ENCODE measurements at regions of chr1 and their contacts with region 1.

Region 1: GRCh38 chr1:28172713-28173150 is 3.8 kb downstream of the PTAFR start:
- DNase-seq: peak; percentile 92
- ATAC-seq: peak; percentile 74
- H3K4me3 ChIP-seq: peak overlapping the region in 2 of 5 experiments; percentile 25 to 38
- H3K4me3 Mint-ChIP-seq: peak overlapping the region; percentile 60
- H3K27ac ChIP-seq: peak overlapping the region; percentile 59 to 66
- H3K27ac Mint-ChIP-seq: peak overlapping the region; percentile 88
- H3K4me1 ChIP-seq: peaks cover 85 to 94% of the 10 kb centered on the region in 2 donors
- H3K4me1 Mint-ChIP-seq: peaks cover 80% of the 10 kb centered on the region
- H3K27me3 ChIP-seq: no peaks in the 10 kb centered on the region
- H3K27me3 Mint-ChIP-seq: no peaks in the 10 kb centered on the region
- CTCF ChIP-seq: no peak

Region 2: DNA sequence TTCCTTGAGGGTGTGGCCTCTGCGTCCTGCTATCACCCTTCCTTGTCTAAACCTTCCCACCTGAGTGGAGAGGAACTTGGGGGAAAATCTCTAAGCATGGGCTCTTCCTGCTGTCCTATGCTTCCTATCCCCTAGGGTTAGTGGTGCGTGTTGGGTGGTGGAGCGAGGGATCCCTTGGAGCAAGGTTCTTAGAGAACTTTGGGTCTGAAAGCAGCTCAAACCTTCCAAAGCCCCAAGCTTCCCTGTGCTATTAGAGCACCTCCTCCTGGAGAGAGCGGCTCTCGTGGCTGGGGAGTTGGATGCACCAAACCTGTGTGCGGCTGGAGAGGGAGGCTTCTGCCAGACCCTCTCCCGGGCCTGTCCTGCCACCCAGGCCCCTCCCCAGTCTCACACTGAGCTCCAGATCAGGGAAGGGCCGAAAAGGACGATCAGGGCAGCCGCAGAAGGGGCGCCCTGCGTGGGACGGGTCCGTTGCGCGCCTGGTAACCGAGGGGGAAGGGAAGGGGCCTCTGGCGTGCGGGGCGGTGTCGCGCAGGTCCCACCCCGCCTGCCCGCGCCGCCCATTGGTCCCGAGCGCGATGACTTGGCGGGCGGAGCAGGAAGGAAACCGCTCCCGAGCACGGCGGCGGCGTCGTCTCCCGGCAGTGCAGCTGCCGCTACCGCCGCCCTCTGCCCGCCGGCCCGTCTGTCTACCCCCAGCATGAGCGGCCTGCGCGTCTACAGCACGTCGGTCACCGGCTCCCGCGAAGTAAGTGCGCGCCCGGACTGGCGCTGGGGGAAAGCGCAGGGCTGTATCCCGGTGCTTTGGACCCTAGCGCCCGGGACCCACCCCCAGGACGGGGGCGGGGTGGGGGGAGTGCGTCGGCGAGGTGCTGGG is 1893.0 kb before region 1 on chr1 and contains the start of gene SH3BGRL3:
- CTCF ChIA-PET with region 1: no interaction called
- POLR2A ChIA-PET with region 1: no interaction called
- intact Hi-C with region 1: loop called (anchors 10 kb)
- DNase-seq: peak; percentile 87
- ATAC-seq: peak; percentile 68
- H3K4me3 ChIP-seq: peak within 1 kb of the TSS; percentile 75 to 93 (median 90)
- H3K4me3 Mint-ChIP-seq: peak within 1 kb of the TSS; percentile 92
- H3K27ac ChIP-seq: peak within 1 kb of the TSS; percentile 73 to 81
- H3K27ac Mint-ChIP-seq: peak within 1 kb of the TSS; percentile 91
- H3K4me1 ChIP-seq: peaks cover 55 to 83% of the 10 kb centered on the region in 2 donors
- H3K4me1 Mint-ChIP-seq: peaks cover 74% of the 10 kb centered on the region
- H3K27me3 ChIP-seq: no peaks in the 10 kb centered on the region
- H3K27me3 Mint-ChIP-seq: no peaks in the 10 kb centered on the region
- CTCF ChIP-seq: no peak
- total RNA-seq, gene SH3BGRL3: 230 and 232 TPM in 2 replicates

Region 3: GRCh38 chr1:28112388-28113241 is 60.1 kb before region 1 on chr1:
- CTCF ChIA-PET with region 1: no interaction called
- POLR2A ChIA-PET with region 1: no interaction called
- intact Hi-C with region 1: loop called (anchors 2 kb)
- DNase-seq: no peak
- ATAC-seq: no peak
- H3K4me3 ChIP-seq: no peak overlapping the region
- H3K4me3 Mint-ChIP-seq: no peak overlapping the region
- H3K27ac ChIP-seq: no peak overlapping the region
- H3K27ac Mint-ChIP-seq: no peak overlapping the region
- H3K4me1 ChIP-seq: peaks cover 15 to 18% of the 10 kb centered on the region in 2 donors
- H3K4me1 Mint-ChIP-seq: peaks cover 19% of the 10 kb centered on the region
- H3K27me3 ChIP-seq: no peaks in the 10 kb centered on the region
- H3K27me3 Mint-ChIP-seq: no peaks in the 10 kb centered on the region
- CTCF ChIP-seq: no peak

Region 4: GRCh38 chr1:28127617-28128257 is 45.0 kb before region 1 on chr1:
- CTCF ChIA-PET with region 1: no interaction called
- POLR2A ChIA-PET with region 1: no interaction called
- intact Hi-C with region 1: loop called (anchors 2 kb)
- DNase-seq: peak; percentile 63
- ATAC-seq: peak; percentile 56
- H3K4me3 ChIP-seq: no peak overlapping the region
- H3K4me3 Mint-ChIP-seq: peak overlapping the region; percentile 55
- H3K27ac ChIP-seq: peak overlapping the region; percentile 2 to 41
- H3K27ac Mint-ChIP-seq: peak overlapping the region; percentile 75
- H3K4me1 ChIP-seq: peaks cover 34 to 37% of the 10 kb centered on the region in 2 donors
- H3K4me1 Mint-ChIP-seq: peaks cover 47% of the 10 kb centered on the region
- H3K27me3 ChIP-seq: no peaks in the 10 kb centered on the region
- H3K27me3 Mint-ChIP-seq: no peaks in the 10 kb centered on the region
- CTCF ChIP-seq: no peak

Region 5: DNA sequence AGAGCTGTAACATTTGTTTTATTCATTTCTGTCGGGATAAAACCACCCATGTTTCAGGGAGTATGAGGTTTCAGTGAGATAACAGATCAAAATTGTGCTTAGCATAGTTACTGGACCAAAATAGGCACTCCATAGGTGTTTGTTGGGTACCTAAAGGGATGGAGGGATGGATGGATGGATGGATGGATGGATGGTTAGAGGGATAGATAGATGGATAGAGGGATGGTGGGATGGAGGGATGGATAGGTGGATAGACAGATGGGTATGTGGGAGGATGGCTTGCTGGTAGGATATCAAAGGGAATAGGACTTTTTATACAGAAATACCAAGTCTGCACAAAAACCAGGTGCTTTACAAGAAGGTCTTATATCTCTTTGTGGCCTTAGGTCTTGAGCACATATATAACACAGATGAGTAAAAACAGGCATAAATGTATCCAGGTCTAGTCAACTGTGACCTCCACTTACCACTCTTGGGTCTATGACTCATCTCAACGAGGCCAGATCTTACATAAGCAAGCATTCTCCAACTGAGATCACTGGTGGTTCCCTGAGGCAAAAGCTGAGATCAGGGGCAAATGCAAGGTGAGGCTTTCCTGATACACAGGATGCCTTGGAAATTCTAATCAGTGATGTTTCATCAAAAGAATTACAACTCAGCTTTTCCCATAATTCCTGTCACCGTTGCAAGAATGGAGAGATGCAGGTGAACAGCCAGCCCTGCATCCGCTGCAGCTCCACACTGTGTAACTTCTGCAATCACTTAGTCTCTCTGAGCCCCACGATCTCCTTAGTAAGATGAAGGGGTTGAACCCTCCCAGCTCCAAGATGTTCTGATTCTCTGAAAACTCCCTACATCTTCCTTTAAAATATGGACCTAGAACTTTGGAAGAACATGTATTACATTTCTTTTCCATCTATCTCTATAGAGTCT is 28.3 kb before region 1 on chr1:
- CTCF ChIA-PET with region 1: interaction called, 11 read pairs
- POLR2A ChIA-PET with region 1: interaction called, 7 read pairs
- intact Hi-C with region 1: loop called (anchors 2 kb)
- DNase-seq: peak; percentile 39
- ATAC-seq: peak; percentile 80
- H3K4me3 ChIP-seq: no peak overlapping the region
- H3K4me3 Mint-ChIP-seq: peak overlapping the region; percentile 36
- H3K27ac ChIP-seq: no peak overlapping the region
- H3K27ac Mint-ChIP-seq: peak overlapping the region; percentile 76
- H3K4me1 ChIP-seq: peaks cover 13 to 42% of the 10 kb centered on the region in 2 donors
- H3K4me1 Mint-ChIP-seq: peaks cover 40% of the 10 kb centered on the region
- H3K27me3 ChIP-seq: no peaks in the 10 kb centered on the region
- H3K27me3 Mint-ChIP-seq: no peaks in the 10 kb centered on the region
- CTCF ChIP-seq: no peak

Region 6: DNA sequence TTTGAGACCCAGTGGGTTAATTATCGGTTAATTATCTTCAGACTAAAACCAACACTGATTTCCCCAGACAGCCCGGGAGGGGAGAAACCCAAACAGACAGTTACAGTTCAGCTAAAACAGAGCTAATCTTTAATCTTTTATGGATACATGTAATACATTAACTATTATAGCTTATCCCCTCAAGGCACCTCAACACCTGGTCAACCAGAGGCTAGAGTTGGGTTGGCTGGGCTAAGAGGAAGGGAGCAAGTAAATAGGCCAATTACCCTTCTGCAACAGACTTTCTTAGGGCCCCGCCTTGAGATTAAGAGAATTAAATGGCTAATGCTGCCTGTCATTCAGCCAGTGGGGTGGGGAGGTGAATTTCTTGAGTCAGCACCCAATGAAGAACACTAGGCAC is 149.5 kb after region 1 on chr1:
- CTCF ChIA-PET with region 1: no interaction called
- POLR2A ChIA-PET with region 1: interaction called, 10 read pairs
- intact Hi-C with region 1: no loop called
- DNase-seq: no peak
- ATAC-seq: no peak
- H3K4me3 ChIP-seq: no peak overlapping the region
- H3K4me3 Mint-ChIP-seq: no peak overlapping the region
- H3K27ac ChIP-seq: no peak overlapping the region
- H3K27ac Mint-ChIP-seq: no peak overlapping the region
- H3K4me1 ChIP-seq: peaks cover 11 to 13% of the 10 kb centered on the region in 2 donors
- H3K4me1 Mint-ChIP-seq: peaks cover 13% of the 10 kb centered on the region
- H3K27me3 ChIP-seq: no peaks in the 10 kb centered on the region
- H3K27me3 Mint-ChIP-seq: peaks cover 3% of the 10 kb centered on the region
- CTCF ChIP-seq: no peak